Left lung (tissue), 14 donors: ENCODE measurements at regions of chr11 and their contacts with region 1.

Region 1: DNA sequence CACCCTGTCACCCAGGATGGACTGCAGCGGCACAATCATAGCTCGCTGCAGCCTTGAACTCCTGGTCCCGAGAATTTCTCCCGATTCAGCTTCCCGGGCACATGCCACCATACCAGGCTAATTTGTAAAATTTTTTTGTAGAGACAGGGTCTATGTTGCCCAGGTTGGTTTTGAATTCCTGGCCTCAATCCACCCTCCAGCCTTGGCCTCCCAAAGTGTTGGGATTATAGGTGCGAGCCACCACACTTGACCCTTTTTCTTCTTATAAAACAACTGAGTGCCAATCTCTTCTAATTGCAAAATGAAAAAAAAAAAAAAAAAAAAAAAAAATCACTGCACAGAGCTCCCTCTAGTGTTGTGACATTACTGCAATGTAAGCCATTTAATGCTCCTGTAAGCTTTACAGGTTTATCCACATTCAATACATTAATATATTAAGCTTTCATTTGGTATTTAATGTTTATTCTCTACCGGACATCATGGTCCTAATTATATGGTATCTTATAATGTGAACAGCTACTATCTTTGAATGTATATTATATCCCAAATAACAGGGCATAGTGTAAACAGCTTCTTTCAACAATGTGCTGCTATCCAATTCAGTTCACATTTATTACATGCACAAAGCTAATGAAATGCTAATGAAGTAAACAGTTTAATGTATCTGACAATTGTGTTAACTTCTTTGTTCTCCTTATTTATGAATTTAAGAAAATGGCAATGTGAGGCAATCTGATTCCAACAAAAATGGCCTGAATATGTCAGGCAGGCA is 44.6 kb downstream of the COPB1 start:
- DNase-seq: peak in 1 of 4 donors; percentile 24
- ATAC-seq: peak; percentile 77
- H3K4me3 ChIP-seq: no peak overlapping the region
- H3K27ac ChIP-seq: no peak overlapping the region
- H3K4me1 ChIP-seq: no peaks in the 10 kb centered on the region
- H3K27me3 ChIP-seq: no peaks in the 10 kb centered on the region
- CTCF ChIP-seq: peak; percentile 34 to 55

Region 2: GRCh38 chr11:14300661-14301304 is 154.3 kb before region 1 on chr11:
- intact Hi-C with region 1: loop called in 1 of 2 experiments (anchors 5 kb)
- DNase-seq: peak in 2 of 4 donors; percentile 45 to 55
- ATAC-seq: peak; percentile 98
- H3K4me3 ChIP-seq: no peak overlapping the region
- H3K27ac ChIP-seq: no peak overlapping the region
- H3K4me1 ChIP-seq: peaks cover 6 to 11% of the 10 kb centered on the region in 2 donors
- H3K27me3 ChIP-seq: no peaks in the 10 kb centered on the region
- CTCF ChIP-seq: peak; percentile 69 to 70

Region 3: DNA sequence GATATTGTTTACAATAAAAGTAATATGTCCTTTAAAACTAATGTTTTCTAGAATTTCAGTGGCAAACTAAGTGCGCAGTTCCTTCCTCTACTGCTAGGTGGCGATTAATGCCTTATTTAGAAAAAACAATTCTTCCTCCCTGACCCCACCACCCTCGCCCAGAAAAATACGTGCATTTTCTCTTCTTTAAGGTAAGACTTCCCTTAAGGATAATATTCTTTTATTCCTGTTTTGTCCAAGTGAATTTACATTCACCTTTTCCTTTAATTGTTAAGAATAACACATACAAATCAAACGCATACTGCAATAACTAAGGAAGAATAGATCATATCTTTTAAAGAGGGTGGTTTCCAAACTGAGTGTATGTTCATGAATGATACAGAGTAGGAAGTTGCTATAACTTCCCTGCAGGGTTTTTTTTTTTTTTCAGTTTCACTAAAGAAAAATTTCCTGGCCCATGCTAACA is 82.1 kb after region 1 on chr11:
- intact Hi-C with region 1: no loop called
- DNase-seq: peak in 2 of 4 donors; percentile 32 to 48
- ATAC-seq: peak; percentile 73
- H3K4me3 ChIP-seq: no peak overlapping the region
- H3K27ac ChIP-seq: peak overlapping the region in 1 of 2 donors; percentile 42
- H3K4me1 ChIP-seq: peaks cover 0 to 50% of the 10 kb centered on the region in 2 donors
- H3K27me3 ChIP-seq: no peaks in the 10 kb centered on the region
- CTCF ChIP-seq: peak; percentile 74 to 83